Colonic mucosa (tissue), 4 donors: ENCODE measurements at regions of chr6 and their contacts with region 1.

Region 1: DNA sequence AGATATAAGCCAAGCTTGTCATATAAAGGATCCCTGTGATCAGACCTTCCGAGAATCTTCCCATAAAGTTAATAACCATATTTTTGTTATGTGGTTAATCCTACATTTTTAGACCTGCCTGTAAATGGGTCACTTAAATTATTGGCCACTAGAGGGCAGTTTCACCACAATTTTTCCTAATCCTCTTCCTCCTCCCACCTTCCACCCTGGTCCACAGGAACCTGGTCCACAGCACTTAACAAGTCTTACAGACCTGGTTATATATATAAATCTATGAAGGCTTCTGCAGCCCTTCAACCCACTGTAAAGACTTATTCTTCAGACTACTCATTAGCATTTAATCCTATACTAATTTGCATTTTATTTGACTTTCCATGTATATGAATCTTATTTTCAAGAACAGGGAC is 28.3 kb downstream of the MRS2 start:
- DNase-seq: peak; percentile 28
- H3K4me3 ChIP-seq: no peak overlapping the region
- H3K27ac ChIP-seq: no peak overlapping the region
- H3K4me1 ChIP-seq: no peaks in the 10 kb centered on the region
- H3K27me3 ChIP-seq: no peaks in the 10 kb centered on the region
- CTCF ChIP-seq: peak; percentile 62

Region 2: GRCh38 chr6:24517659-24518543 is 86.9 kb after region 1 on chr6:
- intact Hi-C with region 1: loop called (anchors 10 kb)
- DNase-seq: no peak
- H3K4me3 ChIP-seq: no peak overlapping the region
- H3K27ac ChIP-seq: no peak overlapping the region
- H3K4me1 ChIP-seq: no peaks in the 10 kb centered on the region
- H3K27me3 ChIP-seq: no peaks in the 10 kb centered on the region
- CTCF ChIP-seq: no peak

Region 3: DNA sequence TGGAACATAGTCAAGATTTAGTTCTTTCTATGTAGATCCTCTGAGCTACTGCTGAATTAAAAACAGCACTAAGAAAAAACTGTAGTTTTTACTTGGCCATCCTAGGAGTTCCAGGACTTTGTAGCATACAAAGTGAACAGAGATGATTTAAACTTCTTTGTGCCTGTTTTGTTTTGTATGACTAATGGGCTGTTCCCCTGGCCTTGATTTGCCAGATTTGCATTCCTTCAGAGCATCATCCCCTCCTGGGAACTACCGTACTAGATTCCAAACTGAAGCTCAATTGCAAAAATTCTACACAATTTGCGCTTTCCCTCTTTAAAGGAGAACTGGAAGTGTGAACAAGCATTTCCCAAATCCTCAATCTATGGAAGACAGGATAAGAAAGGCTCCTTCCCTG is 258.9 kb after region 1 on chr6:
- intact Hi-C with region 1: loop called (anchors 10 kb)
- DNase-seq: no peak
- H3K4me3 ChIP-seq: no peak overlapping the region
- H3K27ac ChIP-seq: no peak overlapping the region
- H3K4me1 ChIP-seq: no peaks in the 10 kb centered on the region
- H3K27me3 ChIP-seq: no peaks in the 10 kb centered on the region
- CTCF ChIP-seq: no peak

Region 4: GRCh38 chr6:24752917-24753490 is 322.0 kb after region 1 on chr6:
- intact Hi-C with region 1: loop called (anchors 10 kb)
- DNase-seq: no peak
- H3K4me3 ChIP-seq: no peak overlapping the region
- H3K27ac ChIP-seq: no peak overlapping the region
- H3K4me1 ChIP-seq: no peaks in the 10 kb centered on the region
- H3K27me3 ChIP-seq: no peaks in the 10 kb centered on the region
- CTCF ChIP-seq: no peak